Naive thymus-derived CD4-positive, alpha-beta T cell (primary cell): ENCODE measurements at regions of chr17 and their contacts with region 1.

Region 1: DNA sequence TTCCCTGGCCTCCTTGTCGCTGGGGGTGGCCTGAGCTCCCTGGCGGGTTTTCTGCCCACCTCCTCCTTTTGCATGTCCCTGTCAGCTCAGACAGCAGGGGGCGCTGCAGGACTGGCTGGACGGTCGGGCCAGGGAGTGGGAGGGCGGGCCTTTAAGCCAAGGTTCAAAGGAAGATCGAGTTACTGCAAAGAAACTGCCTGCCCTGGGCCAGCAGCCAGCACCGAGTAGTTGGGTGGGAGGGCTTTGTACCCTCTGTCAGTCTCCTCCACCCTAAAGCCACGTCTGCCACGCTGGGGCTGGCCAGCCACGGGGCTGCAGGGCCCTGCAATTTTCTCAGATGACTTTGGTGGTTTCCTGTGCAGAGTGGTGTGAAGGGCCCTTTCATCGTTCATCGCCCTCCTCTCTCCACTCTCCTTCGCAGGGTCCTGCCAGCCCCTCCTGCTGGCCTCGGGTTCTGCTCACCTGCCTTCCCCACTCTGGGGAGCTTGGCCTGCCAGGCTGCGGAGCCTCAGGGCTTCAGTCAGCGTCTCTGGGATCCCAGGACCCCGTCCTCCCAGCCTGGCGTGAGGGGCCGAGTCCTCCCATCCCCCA is 12.3 kb downstream of the GPR142 start:
- DNase-seq: peak; percentile 70 to 94 (median 85)
- ATAC-seq: peak; percentile 95
- H3K4me3 ChIP-seq: peak overlapping the region; percentile 19
- H3K4me3 Mint-ChIP-seq: peak overlapping the region in 1 of 10 donors; percentile 7
- H3K27ac ChIP-seq: no peak overlapping the region
- H3K27ac Mint-ChIP-seq: peak overlapping the region in 1 of 9 donors; percentile 41
- H3K4me1 ChIP-seq: peaks cover 8 to 10% of the 10 kb centered on the region in 2 donors
- H3K4me1 Mint-ChIP-seq: peaks cover 0 to 7% (median 0%) of the 10 kb centered on the region in 7 donors
- H3K27me3 ChIP-seq: no peaks in the 10 kb centered on the region
- H3K27me3 Mint-ChIP-seq: peaks cover 0 to 18% (median 0%) of the 10 kb centered on the region in 5 donors

Region 2: GRCh38 chr17:74239170-74239569 is 140.4 kb before region 1 on chr17:
- CTCF ChIA-PET with region 1: no interaction called
- POLR2A ChIA-PET with region 1: no interaction called
- intact Hi-C with region 1: no loop called
- DNase-seq: no peak
- ATAC-seq: peak; percentile 79
- H3K4me3 ChIP-seq: no peak overlapping the region
- H3K4me3 Mint-ChIP-seq: no peak overlapping the region
- H3K27ac ChIP-seq: no peak overlapping the region
- H3K27ac Mint-ChIP-seq: no peak overlapping the region
- H3K4me1 ChIP-seq: no peaks in the 10 kb centered on the region
- H3K4me1 Mint-ChIP-seq: peaks cover 0 to 2% (median 0%) of the 10 kb centered on the region in 7 donors
- H3K27me3 ChIP-seq: no peaks in the 10 kb centered on the region
- H3K27me3 Mint-ChIP-seq: no peaks in the 10 kb centered on the region

Region 3: GRCh38 chr17:74368092-74369081 is 11.2 kb before region 1 on chr17:
- CTCF ChIA-PET with region 1: interaction called, 10 read pairs
- POLR2A ChIA-PET with region 1: interaction called, 5 read pairs
- intact Hi-C with region 1: no loop called
- DNase-seq: peak; percentile 39 to 78 (median 59)
- ATAC-seq: peak; percentile 87
- H3K4me3 ChIP-seq: peak overlapping the region; percentile 43
- H3K4me3 Mint-ChIP-seq: peak overlapping the region in 9 of 10 donors; percentile 53 to 76 (median 68)
- H3K27ac ChIP-seq: no peak overlapping the region
- H3K27ac Mint-ChIP-seq: peak overlapping the region in 1 of 9 donors; percentile 36
- H3K4me1 ChIP-seq: peaks cover 12 to 13% of the 10 kb centered on the region in 2 donors
- H3K4me1 Mint-ChIP-seq: peaks cover 8 to 15% (median 12%) of the 10 kb centered on the region in 7 donors
- H3K27me3 ChIP-seq: no peaks in the 10 kb centered on the region
- H3K27me3 Mint-ChIP-seq: peaks cover 0 to 9% (median 0%) of the 10 kb centered on the region in 5 donors

Region 4: DNA sequence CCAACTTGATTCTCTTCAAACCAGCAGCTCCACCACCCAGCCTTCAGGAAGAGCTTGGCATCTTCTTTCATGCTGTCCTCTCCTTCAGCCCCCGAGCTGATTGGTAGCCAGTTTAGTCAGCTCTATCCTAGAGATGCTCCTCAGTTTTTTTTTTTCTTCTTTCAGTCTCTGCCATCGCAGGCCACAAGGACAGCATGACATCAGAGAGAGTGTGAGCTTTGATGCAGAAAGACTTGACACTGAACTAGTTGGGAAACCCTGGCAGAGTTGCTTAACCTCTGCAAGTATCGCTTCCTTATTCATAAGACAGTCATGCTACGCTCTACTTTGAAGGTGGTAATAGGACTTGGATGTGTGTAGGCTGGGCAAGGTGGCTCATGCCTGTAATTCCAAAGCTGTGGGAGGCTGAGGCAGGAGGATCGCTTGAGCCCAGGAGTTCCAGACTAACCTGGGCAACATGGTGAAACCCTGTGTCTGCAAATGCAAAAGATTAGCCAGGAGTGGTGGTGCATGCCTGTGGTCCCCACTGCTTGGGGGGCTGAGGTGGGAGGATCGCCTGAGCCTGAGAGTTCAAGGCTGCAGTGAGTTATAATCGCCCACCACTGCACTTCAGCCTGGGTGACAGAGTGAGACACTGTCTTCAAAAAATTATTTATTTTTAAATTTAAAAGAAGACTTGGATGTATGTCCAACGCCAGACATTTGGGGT is 149.1 kb after region 1 on chr17:
- CTCF ChIA-PET with region 1: interaction called, 4 read pairs
- POLR2A ChIA-PET with region 1: no interaction called
- intact Hi-C with region 1: loop called (anchors 1 kb)
- DNase-seq: peak in 1 of 9 donors; percentile 12
- ATAC-seq: peak; percentile 64
- H3K4me3 ChIP-seq: no peak overlapping the region
- H3K4me3 Mint-ChIP-seq: no peak overlapping the region
- H3K27ac ChIP-seq: no peak overlapping the region
- H3K27ac Mint-ChIP-seq: no peak overlapping the region
- H3K4me1 ChIP-seq: no peaks in the 10 kb centered on the region
- H3K4me1 Mint-ChIP-seq: peaks cover 3 to 18% (median 6%) of the 10 kb centered on the region in 7 donors
- H3K27me3 ChIP-seq: no peaks in the 10 kb centered on the region
- H3K27me3 Mint-ChIP-seq: peaks cover 23 to 50% (median 32%) of the 10 kb centered on the region in 5 donors

Region 5: DNA sequence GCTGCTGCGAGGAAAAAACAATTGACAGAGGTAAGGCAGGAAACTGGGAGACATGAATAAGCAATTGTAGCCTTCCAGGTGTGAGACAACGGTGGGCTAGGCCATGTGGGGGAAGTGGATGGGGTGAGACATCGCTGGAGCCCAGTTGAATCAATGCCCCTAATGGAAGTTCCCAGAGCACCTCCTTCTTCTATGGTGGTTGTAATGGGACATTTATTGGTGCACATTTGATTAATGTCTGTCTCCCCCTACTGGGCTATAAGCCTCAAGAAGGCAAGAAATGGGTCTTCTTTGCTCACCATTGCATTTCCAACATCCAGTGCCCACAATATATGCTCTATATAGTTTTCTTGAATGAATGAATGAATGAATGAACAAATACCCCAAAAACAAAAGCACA is 266.6 kb after region 1 on chr17:
- CTCF ChIA-PET with region 1: no interaction called
- POLR2A ChIA-PET with region 1: no interaction called
- intact Hi-C with region 1: loop called in 1 of 2 experiments (anchors 5 kb)
- DNase-seq: peak in 2 of 9 donors; percentile 7 to 9
- ATAC-seq: peak; percentile 69
- H3K4me3 ChIP-seq: no peak overlapping the region
- H3K4me3 Mint-ChIP-seq: no peak overlapping the region
- H3K27ac ChIP-seq: no peak overlapping the region
- H3K27ac Mint-ChIP-seq: no peak overlapping the region
- H3K4me1 ChIP-seq: no peaks in the 10 kb centered on the region
- H3K4me1 Mint-ChIP-seq: peaks cover 0 to 11% (median under 1%) of the 10 kb centered on the region in 7 donors
- H3K27me3 ChIP-seq: no peaks in the 10 kb centered on the region
- H3K27me3 Mint-ChIP-seq: peaks cover 20 to 71% (median 37%) of the 10 kb centered on the region in 5 donors

Region 6: GRCh38 chr17:74864866-74865395 is 485.3 kb after region 1 on chr17:
- CTCF ChIA-PET with region 1: interaction called, 5 read pairs
- POLR2A ChIA-PET with region 1: no interaction called
- intact Hi-C with region 1: loop called in 1 of 2 experiments (anchors 5 kb)
- DNase-seq: peak; percentile 35 to 73 (median 59)
- ATAC-seq: peak; percentile 74
- H3K4me3 ChIP-seq: no peak overlapping the region
- H3K4me3 Mint-ChIP-seq: peak overlapping the region in 1 of 10 donors; percentile 35
- H3K27ac ChIP-seq: no peak overlapping the region
- H3K27ac Mint-ChIP-seq: peak overlapping the region in 2 of 9 donors; percentile 16 to 47
- H3K4me1 ChIP-seq: peaks cover 12 to 14% of the 10 kb centered on the region in 2 donors
- H3K4me1 Mint-ChIP-seq: peaks cover 0 to 23% (median 16%) of the 10 kb centered on the region in 7 donors
- H3K27me3 ChIP-seq: peaks cover 4 to 7% of the 10 kb centered on the region in 2 donors
- H3K27me3 Mint-ChIP-seq: peaks cover 3 to 24% (median 11%) of the 10 kb centered on the region in 5 donors